PC-9 (cell line): ENCODE measurements at regions of chr20 and their contacts with region 1.

Region 1: GRCh38 chr20:59940174-59940971 is at the starts of genes FAM217B and PPP1R3D:
- DNase-seq: peak; percentile 95 to 98
- H3K4me3 ChIP-seq: peak within 1 kb of the TSS; percentile 72
- H3K27ac ChIP-seq: peak within 1 kb of the TSS; percentile 81
- H3K4me1 ChIP-seq: peaks cover 50% of the 10 kb centered on the region
- H3K27me3 ChIP-seq: no peaks in the 10 kb centered on the region
- CTCF ChIP-seq: peak; percentile 18; the same call in 1 of the 2 replicates
- total RNA-seq, gene FAM217B: 11.7 and 20.2 TPM in 2 replicates
- total RNA-seq, gene PPP1R3D: 9.0 and 9.9 TPM in 2 replicates

Region 2: DNA sequence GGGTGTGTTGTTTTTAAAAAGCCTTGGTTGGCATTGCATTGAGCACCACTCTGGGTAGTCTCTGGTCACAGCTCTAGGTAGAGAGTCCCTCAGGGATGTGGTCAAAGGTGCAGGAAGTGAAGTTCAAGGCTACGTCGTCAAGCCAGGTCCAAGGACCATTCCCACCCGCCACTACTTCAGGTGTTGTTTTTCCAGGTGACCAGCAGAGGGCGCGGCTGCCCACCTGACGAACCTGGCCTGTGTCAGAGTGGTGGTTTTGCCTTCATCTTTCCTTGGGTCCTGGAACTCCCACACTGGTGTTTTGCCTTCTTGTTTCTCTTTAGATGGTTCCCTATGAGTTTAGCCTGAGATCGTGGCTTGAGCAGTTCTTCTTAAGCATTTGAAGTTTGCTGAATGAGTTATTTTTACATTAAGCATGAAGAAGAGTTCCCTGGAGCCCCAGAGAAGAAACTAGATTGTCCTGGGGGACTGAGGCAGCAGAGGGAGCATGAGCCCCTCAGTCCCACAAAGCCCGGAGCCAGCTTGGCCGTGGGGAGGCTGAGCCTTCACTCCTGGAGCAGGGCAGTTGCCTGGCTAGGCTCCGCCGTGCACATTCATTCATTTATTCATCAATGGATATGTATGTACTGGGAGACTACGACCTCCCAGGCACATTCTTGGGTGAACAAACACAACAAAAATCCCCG is 341.6 kb before region 1 on chr20:
- CTCF ChIA-PET with region 1: no interaction called
- POLR2A ChIA-PET with region 1: no interaction called
- intact Hi-C with region 1: loop called (anchors 10 kb)
- DNase-seq: peak in 1 of 2 experiments; percentile 14
- H3K4me3 ChIP-seq: no peak overlapping the region
- H3K27ac ChIP-seq: no peak overlapping the region
- H3K4me1 ChIP-seq: no peaks in the 10 kb centered on the region
- H3K27me3 ChIP-seq: peaks cover 97% of the 10 kb centered on the region
- CTCF ChIP-seq: peak; percentile 96

Region 3: GRCh38 chr20:59808729-59809381 is 131.5 kb before region 1 on chr20:
- CTCF ChIA-PET with region 1: no interaction called
- POLR2A ChIA-PET with region 1: no interaction called
- intact Hi-C with region 1: no loop called
- DNase-seq: no peak
- H3K4me3 ChIP-seq: no peak overlapping the region
- H3K27ac ChIP-seq: no peak overlapping the region
- H3K4me1 ChIP-seq: no peaks in the 10 kb centered on the region
- H3K27me3 ChIP-seq: peaks cover 72% of the 10 kb centered on the region
- CTCF ChIP-seq: no peak

Region 4: DNA sequence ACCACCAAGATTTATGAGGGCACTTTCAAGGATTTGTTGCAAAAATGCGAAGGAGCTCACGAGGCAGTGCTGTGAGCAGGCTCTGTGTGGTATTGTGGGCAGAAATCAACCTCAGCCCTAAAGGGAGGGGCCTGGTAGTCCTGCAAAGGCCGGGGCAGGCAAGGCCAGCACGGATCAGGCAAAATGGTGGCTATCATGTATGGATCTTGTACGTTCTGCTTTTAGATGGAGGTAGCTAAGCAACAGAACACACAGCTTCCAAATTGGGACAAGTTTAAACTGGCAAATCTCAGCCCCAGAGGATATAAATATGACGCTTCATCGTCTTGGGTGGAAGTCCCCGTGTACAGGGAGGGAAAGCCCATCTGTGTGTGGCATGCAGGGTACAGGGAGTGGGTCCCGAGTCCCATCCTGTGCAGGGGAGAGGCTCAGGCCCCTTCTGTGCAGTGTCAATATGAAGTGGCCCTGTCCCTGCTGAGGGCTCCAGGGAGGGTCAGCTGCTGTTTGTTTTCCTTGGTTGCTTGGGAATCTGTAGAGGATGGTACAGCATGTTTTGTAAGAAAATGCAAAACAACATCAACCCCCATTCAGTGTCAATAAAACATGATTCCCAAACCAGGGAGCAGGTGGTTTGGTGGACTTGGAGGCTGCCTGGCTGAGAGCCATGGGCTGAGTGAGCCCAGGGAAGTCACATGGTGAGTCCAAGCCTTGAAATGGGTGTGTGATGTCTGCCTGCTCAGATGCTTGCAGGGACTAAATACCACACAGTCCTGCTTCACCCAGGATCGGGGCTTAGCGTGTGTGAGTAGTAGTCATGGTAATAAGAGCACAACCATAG is 120.0 kb before region 1 on chr20:
- CTCF ChIA-PET with region 1: no interaction called
- POLR2A ChIA-PET with region 1: no interaction called
- intact Hi-C with region 1: no loop called
- DNase-seq: peak in 1 of 2 experiments; percentile 69
- H3K4me3 ChIP-seq: no peak overlapping the region
- H3K27ac ChIP-seq: no peak overlapping the region
- H3K4me1 ChIP-seq: peaks cover under 1% of the 10 kb centered on the region; the same call in 1 of the 2 replicates
- H3K27me3 ChIP-seq: 0 out of 2 replicates have a peak, but pooled peaks cover 16% of the 10 kb centered on the region
- CTCF ChIP-seq: no peak

Region 5: GRCh38 chr20:59831024-59831915 is 109.1 kb before region 1 on chr20:
- CTCF ChIA-PET with region 1: no interaction called
- POLR2A ChIA-PET with region 1: interaction called, 3 read pairs
- intact Hi-C with region 1: loop called (anchors 2 kb)
- DNase-seq: peak; percentile 87 to 99
- H3K4me3 ChIP-seq: peak overlapping the region; percentile 37; the same call in 1 of the 2 replicates
- H3K27ac ChIP-seq: peak overlapping the region; percentile 75
- H3K4me1 ChIP-seq: peaks cover 68% of the 10 kb centered on the region
- H3K27me3 ChIP-seq: no peaks in the 10 kb centered on the region
- CTCF ChIP-seq: no peak

Region 6: DNA sequence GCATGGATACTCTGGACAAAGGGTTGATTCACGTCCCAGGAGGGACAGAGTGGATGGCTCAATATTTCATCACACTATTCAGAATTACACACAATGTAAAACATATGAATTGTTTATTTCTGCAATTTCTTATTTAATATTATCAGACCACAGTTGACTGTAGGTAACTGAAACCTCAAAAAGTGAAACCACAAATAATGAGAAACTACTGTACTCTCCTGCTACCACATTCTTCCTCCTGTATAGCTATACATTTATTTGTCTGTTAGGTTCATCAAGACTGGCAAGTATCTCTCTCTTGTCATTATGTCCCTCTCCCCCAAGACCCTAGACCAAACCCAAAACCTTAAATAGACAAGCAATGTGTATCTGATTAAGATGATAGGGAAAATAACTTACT is 67.0 kb before region 1 on chr20:
- CTCF ChIA-PET with region 1: no interaction called
- POLR2A ChIA-PET with region 1: interaction called, 12 read pairs
- intact Hi-C with region 1: no loop called
- DNase-seq: no peak
- H3K4me3 ChIP-seq: no peak overlapping the region
- H3K27ac ChIP-seq: no peak overlapping the region
- H3K4me1 ChIP-seq: no peaks in the 10 kb centered on the region
- H3K27me3 ChIP-seq: no peaks in the 10 kb centered on the region
- CTCF ChIP-seq: no peak

Region 7: DNA sequence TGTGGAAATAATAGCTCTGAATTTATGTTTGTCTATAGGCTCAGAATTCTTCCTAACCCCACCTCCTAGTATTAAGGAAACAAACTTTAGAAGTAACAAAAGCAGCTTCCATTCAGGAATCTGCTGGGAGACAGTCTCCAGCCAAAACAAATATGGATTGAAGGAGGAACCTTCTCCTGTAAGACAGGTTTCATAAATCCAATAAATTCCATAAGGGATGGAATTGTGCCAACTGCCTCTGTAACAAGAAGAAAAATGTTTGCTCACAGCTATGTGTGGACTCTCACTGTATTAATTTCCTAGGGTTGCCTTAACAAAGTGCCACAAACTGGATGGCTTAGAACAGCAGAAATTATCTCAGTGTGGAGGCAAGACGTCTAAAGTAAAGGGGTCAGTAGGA is 14.4 kb before region 1 on chr20:
- CTCF ChIA-PET with region 1: no interaction called
- POLR2A ChIA-PET with region 1: interaction called, 10 read pairs
- intact Hi-C with region 1: no loop called
- DNase-seq: peak in 1 of 2 experiments; percentile 95
- H3K4me3 ChIP-seq: no peak overlapping the region
- H3K27ac ChIP-seq: peak overlapping the region; percentile 48
- H3K4me1 ChIP-seq: peaks cover 29% of the 10 kb centered on the region
- H3K27me3 ChIP-seq: no peaks in the 10 kb centered on the region
- CTCF ChIP-seq: no peak

Region 8: GRCh38 chr20:59985864-59986263 is 45.5 kb after region 1 on chr20:
- CTCF ChIA-PET with region 1: no interaction called
- POLR2A ChIA-PET with region 1: interaction called, 6 read pairs
- intact Hi-C with region 1: loop called (anchors 5 kb)
- DNase-seq: peak in 1 of 2 experiments; percentile 56
- H3K4me3 ChIP-seq: no peak overlapping the region
- H3K27ac ChIP-seq: no peak overlapping the region
- H3K4me1 ChIP-seq: peaks cover 36% of the 10 kb centered on the region
- H3K27me3 ChIP-seq: no peaks in the 10 kb centered on the region
- CTCF ChIP-seq: peak; percentile 52

Region 9: GRCh38 chr20:60001108-60001507 is 60.7 kb after region 1 on chr20:
- CTCF ChIA-PET with region 1: no interaction called
- POLR2A ChIA-PET with region 1: no interaction called
- intact Hi-C with region 1: no loop called
- DNase-seq: no peak
- H3K4me3 ChIP-seq: no peak overlapping the region
- H3K27ac ChIP-seq: no peak overlapping the region
- H3K4me1 ChIP-seq: peaks cover 16% of the 10 kb centered on the region
- H3K27me3 ChIP-seq: no peaks in the 10 kb centered on the region
- CTCF ChIP-seq: no peak